Sigmoid colon (tissue), 7 donors: ENCODE measurements at regions of chr1 and their contacts with region 1.

Region 1: GRCh38 chr1:27469334-27469733 is 20.6 kb downstream of the WASF2 start:
- DNase-seq: no peak
- H3K4me3 ChIP-seq: no peak overlapping the region
- H3K27ac ChIP-seq: no peak overlapping the region
- H3K4me1 ChIP-seq: peaks cover 0 to 79% (median 47%) of the 10 kb centered on the region in 4 donors
- H3K27me3 ChIP-seq: no peaks in the 10 kb centered on the region
- CTCF ChIP-seq: no peak
- EP300 ChIP-seq: no peak
- POLR2A ChIP-seq: no peak

Region 2: GRCh38 chr1:27430903-27431600 is 38.3 kb before region 1 on chr1:
- intact Hi-C with region 1: loop called (anchors 5 kb)
- DNase-seq: no peak
- H3K4me3 ChIP-seq: no peak overlapping the region
- H3K27ac ChIP-seq: peak overlapping the region; percentile 75 to 87 (median 82)
- H3K4me1 ChIP-seq: peaks cover 0 to 94% (median 81%) of the 10 kb centered on the region in 4 donors
- H3K27me3 ChIP-seq: no peaks in the 10 kb centered on the region
- CTCF ChIP-seq: no peak
- EP300 ChIP-seq: peak in 1 of 4 donors; percentile 51
- POLR2A ChIP-seq: no peak